ENCODE measurements at regions of chr5 and their contacts with region 1.

Region 1: DNA sequence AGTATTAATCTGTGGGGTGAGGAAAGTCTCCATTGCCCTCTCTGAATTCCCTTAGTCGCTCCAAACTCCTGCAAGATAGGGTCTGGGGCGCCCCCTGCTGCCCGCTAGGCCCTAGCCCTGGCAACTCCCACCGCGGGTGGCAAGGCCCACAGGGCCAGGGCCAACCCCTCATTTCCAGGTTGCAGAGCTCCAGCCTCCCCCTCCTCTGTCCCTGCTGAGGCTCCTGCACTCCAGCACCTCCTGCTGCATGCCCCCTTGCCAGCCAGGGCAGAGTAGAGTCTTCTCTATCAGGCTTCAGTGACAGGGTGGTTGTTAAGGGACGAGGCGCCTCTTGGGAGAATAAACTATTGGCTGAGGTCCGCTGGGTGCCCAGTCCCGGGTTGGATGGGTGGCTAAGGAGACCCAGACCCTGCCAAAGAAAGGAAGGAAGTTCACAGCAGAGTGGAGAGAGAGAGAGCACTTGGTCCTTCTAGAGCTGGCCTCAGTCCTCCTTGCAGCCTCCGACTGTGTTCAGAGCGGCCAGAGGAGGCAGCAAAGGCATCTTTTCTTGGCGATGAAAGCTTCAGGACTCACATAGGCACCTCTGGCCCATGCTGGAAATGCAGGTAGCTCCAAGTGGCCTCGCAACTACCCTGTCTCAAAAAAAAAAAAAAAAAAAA is 45.6 kb downstream of the SAR1B start:
- DNase-seq: peak; percentile 78 to 93
- H3K4me3 ChIP-seq: no peak overlapping the region
- H3K4me1 ChIP-seq: no peaks in the 10 kb centered on the region
- H3K27me3 ChIP-seq: no peaks in the 10 kb centered on the region

Region 2: DNA sequence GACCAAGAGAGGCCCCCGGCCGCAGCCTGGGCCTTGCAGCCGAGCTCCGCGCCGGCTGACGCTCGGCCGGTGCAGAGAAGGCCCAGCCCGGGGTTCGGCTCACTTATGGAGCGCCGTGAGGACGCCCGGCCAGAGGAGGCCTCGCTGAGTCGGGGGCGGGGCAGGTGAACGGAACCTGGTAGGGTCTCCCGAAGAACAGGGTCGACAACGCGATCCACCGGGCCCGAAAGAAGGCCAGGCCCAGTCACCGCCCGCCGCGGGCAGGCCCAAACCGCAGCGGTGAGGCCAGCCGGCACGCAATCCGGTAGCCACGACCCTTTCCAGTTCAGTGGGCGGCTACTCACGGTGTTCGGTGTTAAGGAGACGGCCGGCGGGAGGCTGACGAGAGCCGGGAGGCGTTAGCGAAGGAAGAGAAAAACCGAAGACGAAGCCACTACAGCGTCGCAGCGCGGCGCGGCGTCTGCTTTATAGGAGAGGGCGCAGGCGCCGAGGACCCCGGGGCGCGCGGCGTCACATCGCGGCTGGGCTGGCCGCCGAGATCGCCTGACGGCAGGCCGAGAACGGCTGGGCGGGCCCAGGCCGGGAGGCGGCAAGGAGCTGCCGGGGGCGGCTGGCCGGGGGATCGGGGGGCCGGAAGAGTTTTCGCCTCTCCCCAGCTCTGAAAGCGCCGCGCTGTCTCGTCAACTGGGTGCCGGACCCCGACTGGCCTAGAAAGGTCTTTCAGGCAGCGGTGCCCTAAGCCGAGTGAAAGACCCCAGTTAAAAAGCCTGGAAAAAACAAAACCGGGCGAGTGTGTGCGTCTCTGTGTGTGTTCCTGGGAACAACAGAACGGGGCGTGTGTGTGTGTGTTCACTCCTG is 410.3 kb before region 1 on chr5 and contains the start of gene SKP1:
- in situ Hi-C with region 1: loop called (anchors 25 kb)
- DNase-seq: peak; percentile 80 to 85
- H3K4me3 ChIP-seq: peak within 1 kb of the TSS; percentile 100
- H3K4me1 ChIP-seq: peaks cover 7% of the 10 kb centered on the region
- H3K27me3 ChIP-seq: no peaks in the 10 kb centered on the region

Region 3: GRCh38 chr5:134825212-134825611 is 238.2 kb after region 1 on chr5:
- in situ Hi-C with region 1: no loop called
- DNase-seq: no peak
- H3K4me3 ChIP-seq: no peak overlapping the region
- H3K4me1 ChIP-seq: no peaks in the 10 kb centered on the region; the same call in 1 of the 2 replicates
- H3K27me3 ChIP-seq: no peaks in the 10 kb centered on the region

Region 4: GRCh38 chr5:135214897-135215616 is 628.1 kb after region 1 on chr5:
- in situ Hi-C with region 1: no loop called
- DNase-seq: peak in 1 of 2 experiments; percentile 3
- H3K4me3 ChIP-seq: no peak overlapping the region
- H3K4me1 ChIP-seq: peaks cover 6% of the 10 kb centered on the region
- H3K27me3 ChIP-seq: peaks cover 48% of the 10 kb centered on the region